Right ventricle myocardium superior (tissue), 1 donor: ENCODE measurements at regions of chr11 and their contacts with region 1.

Region 1: GRCh38 chr11:30617771-30618170 is 31.6 kb upstream of the MPPED2 start:
- DNase-seq: no peak
- ATAC-seq: no peak

Region 2: DNA sequence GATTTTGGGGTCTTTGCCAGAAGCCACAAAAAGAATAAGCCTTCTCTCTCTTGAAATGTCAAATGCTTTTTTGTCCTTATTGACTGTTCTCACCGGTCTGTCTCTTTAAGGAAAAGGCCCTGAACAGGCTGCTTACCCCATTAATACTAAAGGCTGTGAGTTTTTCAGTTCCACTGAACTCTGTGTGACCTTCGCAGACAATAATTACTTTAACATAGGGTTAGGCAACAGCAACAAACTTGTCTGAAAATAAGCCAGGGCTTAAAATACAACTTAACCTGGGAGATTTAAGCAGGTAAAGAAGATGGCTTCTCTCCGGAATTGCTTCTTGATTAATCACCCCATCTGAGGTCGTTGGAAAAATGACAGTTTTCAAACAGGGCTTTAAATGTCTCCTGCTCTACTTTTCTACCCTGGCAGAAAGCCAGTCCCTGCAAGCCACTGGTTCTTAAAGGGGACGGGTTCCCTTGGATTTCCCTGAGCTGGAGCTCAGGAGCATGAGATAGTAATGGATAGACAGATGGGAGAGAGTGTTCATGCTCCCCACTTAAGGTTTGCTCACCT is 225.5 kb before region 1 on chr11:
- intact Hi-C with region 1: no loop called
- DNase-seq: no peak
- ATAC-seq: peak; percentile 58

Region 3: DNA sequence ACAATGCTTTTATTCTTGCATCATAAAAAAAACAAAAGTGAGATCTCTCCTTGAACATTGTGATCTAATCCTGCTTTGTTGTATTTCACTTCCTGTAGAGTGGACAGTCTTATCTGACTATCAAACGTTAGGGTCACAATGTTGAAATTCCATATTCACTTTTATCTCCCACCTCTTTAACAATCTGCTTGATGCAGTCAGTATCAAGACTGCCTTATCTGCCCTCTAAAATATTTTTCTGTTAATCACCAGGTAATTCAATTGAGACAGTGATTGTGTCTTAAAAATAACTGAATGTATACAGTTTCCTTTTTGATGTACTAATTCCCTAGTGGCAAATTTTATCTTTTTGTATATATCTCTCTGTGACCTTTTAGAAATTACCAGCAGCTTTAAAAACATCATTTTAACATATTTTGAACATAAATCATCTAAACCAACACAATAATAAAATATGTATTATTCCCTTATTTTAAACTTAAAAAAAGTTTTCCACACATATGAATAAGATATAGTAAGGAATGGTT is 111.5 kb after region 1 on chr11:
- intact Hi-C with region 1: no loop called
- DNase-seq: no peak
- ATAC-seq: no peak

Region 4: DNA sequence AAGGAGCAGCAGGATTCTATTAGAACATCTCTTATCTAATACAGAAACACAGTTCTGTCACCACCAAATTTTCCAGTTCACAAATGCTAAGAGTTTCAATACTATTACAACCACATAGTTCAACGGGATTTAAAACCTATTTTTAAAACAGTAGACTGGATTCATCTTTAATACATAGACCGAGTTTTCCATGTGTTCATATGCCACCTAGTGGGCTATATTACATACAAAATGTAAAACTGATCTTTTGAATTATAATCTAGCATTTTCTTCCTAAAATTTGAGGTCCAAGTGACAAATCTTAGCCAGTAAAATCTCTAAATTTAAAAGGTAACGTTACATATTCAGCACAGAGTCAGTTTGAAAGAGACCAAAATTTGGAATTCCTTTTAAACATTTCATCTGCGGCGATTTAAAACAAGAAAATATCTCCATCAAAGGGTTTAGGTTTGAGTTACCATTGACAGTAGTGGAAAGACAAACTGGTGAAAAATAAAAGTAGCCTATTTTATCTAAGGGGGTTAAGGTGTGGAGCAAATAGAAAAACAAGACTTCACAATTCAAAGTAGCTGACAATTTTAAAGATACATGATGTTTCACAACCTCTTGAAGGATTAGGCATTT is 237.7 kb after region 1 on chr11:
- intact Hi-C with region 1: loop called (anchors 10 kb)
- DNase-seq: no peak
- ATAC-seq: peak; percentile 45

Region 5: GRCh38 chr11:31060880-31061279 is 443.1 kb after region 1 on chr11:
- intact Hi-C with region 1: no loop called
- DNase-seq: no peak
- ATAC-seq: no peak